Naive thymus-derived CD4-positive, alpha-beta T cell (primary cell): ENCODE measurements at regions of chr2 and their contacts with region 1.

Region 1: DNA sequence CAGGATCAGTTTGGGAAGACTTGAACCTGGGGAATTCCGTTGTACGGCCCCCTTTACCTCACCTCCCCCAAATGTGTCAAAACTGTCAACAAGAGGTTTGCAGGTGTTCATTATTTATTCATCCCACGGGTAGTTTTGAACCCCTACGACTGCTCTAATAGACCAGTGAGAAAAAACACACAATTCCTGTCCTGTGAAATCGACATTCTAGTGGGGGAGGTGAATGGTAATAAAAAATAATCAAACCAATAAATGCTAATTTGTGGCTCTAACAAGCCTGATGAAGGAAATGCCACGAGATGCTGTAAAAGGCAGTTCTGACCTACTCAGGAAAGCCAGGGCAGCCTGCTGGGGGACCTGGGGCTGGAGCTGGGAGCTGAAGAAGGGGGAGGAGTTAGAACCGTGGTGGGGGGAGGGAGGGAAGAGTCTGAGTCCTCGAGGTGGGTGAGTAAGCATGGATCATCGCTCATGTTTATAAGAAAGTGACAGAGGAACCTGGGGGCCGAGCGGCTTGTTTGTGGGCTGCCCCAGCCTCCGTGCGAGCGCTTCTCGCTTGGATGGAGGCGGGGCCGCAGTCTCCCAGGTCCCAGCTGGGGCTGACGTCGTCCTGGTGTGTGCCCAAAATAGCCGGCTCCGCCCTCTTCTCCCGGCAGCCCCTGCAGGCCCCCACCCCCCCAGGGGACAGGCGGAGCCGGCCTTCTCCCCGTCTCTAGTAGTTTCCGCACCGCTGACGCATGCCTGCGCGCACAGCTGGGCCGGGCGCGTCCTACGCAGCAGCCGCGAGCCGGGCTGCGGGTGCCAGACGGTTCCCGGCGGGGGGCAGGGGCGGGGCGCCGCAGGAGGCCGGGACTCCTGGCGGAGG is at the start of gene DNAJB2:
- DNase-seq: peak; percentile 94 to 100 (median 98)
- ATAC-seq: peak; percentile 91
- H3K4me3 ChIP-seq: peak within 1 kb of the TSS; percentile 73
- H3K4me3 Mint-ChIP-seq: peak within 1 kb of the TSS; percentile 85 to 99 (median 97)
- H3K27ac ChIP-seq: peak within 1 kb of the TSS; percentile 98
- H3K27ac Mint-ChIP-seq: peak within 1 kb of the TSS; percentile 97 to 100 (median 99)
- H3K4me1 ChIP-seq: peaks cover 22 to 33% of the 10 kb centered on the region in 2 donors
- H3K4me1 Mint-ChIP-seq: peaks cover 32 to 58% (median 53%) of the 10 kb centered on the region in 7 donors
- H3K27me3 ChIP-seq: no peaks in the 10 kb centered on the region
- H3K27me3 Mint-ChIP-seq: peaks cover 0 to 3% (median 0%) of the 10 kb centered on the region in 5 donors
- total RNA-seq, gene DNAJB2: 50.8 to 134 (median 113) TPM

Region 2: DNA sequence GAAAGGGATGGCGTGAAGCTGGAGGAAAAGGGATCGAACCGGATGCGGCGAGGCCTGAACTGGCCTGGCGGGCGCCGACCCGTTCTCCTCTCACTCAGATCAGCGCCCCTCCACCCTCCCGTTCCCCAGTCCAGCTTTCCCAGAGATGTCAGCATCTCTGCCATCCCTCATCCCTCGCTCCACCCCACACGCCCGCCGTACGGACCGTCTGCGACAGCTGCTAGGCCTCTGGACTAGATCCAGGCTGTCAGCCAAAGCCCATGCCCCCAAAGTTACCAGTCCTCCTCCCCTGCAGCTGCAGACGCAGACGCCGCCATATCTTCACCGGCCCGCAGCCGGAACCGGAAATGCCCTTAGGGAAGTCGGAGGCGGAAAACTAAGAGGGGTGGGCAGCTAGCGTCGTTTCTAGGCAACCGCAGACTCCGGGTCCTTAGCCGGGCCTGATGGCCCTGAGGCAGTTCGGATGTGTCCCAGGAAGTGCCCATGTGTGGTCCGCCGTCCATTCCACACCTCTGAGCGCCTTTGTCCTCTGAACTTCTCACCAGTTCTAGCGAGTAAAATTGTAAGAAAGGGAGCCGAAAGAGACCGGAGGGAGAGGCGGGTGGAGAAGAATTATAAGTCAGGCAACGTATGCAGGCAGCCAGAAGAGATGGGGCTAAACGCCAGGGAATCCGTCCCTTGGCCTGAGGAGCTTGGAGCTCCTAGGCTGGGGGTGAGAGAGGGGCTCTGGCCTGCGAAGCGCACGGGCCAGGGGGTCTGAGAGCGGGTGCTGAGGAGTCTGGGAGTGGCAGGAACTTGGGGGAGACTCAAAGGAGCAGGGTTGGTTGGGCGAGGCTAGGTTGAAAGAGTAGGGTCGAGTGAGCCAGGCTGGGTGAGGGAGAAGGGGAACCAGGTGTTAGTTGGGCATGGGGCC is 607.0 kb before region 1 on chr2 and contains the starts of genes RNF25 and STK36:
- CTCF ChIA-PET with region 1: no interaction called
- POLR2A ChIA-PET with region 1: no interaction called
- intact Hi-C with region 1: loop called (anchors 1 to 5 kb)
- DNase-seq: peak; percentile 60 to 86 (median 79)
- ATAC-seq: peak; percentile 96
- H3K4me3 ChIP-seq: peak within 1 kb of the TSS; percentile 81
- H3K4me3 Mint-ChIP-seq: peak within 1 kb of the TSS; percentile 88 to 100 (median 98)
- H3K27ac ChIP-seq: peak within 1 kb of the TSS; percentile 84
- H3K27ac Mint-ChIP-seq: peak within 1 kb of the TSS; percentile 90 to 98 (median 96)
- H3K4me1 ChIP-seq: peaks cover 9 to 15% of the 10 kb centered on the region in 2 donors
- H3K4me1 Mint-ChIP-seq: peaks cover 14 to 29% (median 24%) of the 10 kb centered on the region in 7 donors
- H3K27me3 ChIP-seq: no peaks in the 10 kb centered on the region
- H3K27me3 Mint-ChIP-seq: no peaks in the 10 kb centered on the region
- total RNA-seq, gene RNF25: 12.6 to 33.4 (median 28.3) TPM
- total RNA-seq, gene STK36: 18.9 to 28.1 (median 19.7) TPM

Region 3: DNA sequence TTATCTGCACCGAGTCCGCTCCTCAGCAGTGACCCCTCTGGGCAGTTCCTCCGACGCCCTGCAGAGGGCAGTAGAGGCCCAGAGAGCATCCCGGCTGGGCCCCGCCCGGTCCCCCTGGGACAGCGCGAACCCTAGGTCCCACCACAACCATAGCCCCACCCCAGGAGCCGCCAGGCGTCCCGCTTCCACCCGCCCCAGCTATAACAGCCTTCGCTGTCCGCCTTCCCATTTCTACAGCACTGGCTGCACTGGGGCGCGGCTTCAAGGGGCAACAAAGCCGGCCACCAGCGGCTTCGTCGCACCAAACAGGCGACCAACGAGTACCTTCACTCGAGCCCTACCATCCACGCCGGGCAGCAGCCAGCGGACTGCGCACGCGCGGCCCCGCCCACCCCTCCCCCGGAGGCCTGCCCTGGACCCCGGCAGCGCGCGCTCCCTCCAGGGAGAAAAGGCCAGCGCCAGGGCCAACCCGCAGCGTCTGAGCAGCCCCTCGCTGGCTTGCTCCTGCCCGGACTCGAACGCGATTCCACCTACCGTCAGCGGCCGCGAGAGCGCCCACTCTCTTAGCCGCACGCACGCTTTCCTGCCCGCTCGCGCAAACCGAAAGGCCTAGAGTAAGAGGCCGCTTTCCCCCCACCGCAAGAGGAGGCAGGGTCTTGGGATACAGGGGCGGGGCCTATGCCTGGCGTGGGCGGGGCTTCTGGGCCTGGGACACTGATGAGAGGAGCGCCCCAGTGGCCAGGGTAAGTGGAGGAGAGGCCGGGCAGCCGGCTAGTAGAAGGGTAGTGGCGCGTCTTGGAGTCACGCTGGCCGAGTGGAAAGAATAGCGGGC is 118.5 kb before region 1 on chr2 and contains the start of gene NHEJ1:
- CTCF ChIA-PET with region 1: interaction called, 3 read pairs
- POLR2A ChIA-PET with region 1: interaction called, 4 read pairs
- intact Hi-C with region 1: loop called (anchors 1 kb)
- DNase-seq: peak; percentile 84 to 98 (median 92)
- ATAC-seq: peak; percentile 96
- H3K4me3 ChIP-seq: peak within 1 kb of the TSS; percentile 70
- H3K4me3 Mint-ChIP-seq: peak within 1 kb of the TSS; percentile 88 to 97 (median 93)
- H3K27ac ChIP-seq: peak within 1 kb of the TSS; percentile 77
- H3K27ac Mint-ChIP-seq: peak within 1 kb of the TSS; percentile 81 to 97 (median 93)
- H3K4me1 ChIP-seq: peaks cover 11 to 12% of the 10 kb centered on the region in 2 donors
- H3K4me1 Mint-ChIP-seq: peaks cover 13 to 41% (median 24%) of the 10 kb centered on the region in 7 donors
- H3K27me3 ChIP-seq: no peaks in the 10 kb centered on the region
- H3K27me3 Mint-ChIP-seq: no peaks in the 10 kb centered on the region
- total RNA-seq, gene NHEJ1: 11.4 to 24.0 (median 17.9) TPM

Region 4: DNA sequence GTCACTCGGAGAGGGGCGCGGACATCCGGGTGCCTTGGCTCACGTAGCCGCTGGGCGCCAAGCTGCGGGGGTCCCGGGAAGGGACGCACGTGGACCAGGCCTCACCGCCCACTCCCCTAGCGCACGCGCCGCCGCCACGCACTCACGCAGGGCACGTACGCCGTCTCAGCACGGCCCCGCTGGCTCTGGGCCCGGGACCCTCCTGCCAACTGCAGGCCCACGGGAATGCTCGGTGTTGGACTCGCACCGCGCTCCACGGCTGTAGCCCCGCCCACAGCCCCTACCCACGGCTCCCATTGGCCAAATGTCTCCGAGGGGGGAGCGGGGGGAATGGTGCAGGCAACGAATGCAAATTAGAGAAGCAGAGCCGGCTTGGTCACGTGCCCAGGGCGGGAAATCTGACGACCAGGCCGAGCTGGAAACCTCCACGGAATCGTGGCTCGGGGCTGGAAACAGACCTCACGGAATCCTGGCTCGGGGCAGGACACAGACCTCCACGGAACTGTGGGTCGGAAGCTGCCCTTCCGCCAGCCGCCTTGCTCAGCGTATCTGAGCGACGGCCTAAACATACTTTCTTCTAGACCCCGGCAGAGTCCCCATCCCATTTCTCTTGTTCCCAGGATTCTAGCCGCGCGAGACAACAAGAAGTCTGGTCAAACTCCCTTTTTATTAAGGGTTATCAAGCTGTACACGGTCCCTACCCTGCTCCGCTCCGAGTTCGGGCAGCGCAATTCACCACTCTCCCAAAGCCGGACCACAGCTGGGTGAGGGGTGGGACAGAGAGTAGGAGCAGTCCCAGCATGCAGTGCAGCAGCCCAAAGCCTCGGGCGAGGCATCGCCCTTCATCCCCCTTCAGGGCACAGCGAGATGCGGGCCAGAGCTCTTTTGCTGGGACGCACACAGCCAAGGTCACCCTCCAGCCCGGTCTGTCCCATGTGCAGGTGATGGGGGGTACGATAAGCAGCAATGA is 59.9 kb before region 1 on chr2 and contains the start of gene ABCB6:
- CTCF ChIA-PET with region 1: interaction called, 3 read pairs
- POLR2A ChIA-PET with region 1: interaction called, 4 read pairs
- intact Hi-C with region 1: loop called (anchors 1 to 2 kb)
- DNase-seq: peak; percentile 72 to 90 (median 85)
- ATAC-seq: peak; percentile 92
- H3K4me3 ChIP-seq: peak within 1 kb of the TSS; percentile 60
- H3K4me3 Mint-ChIP-seq: peak within 1 kb of the TSS; percentile 78 to 89 (median 82)
- H3K27ac ChIP-seq: peak within 1 kb of the TSS; percentile 65
- H3K27ac Mint-ChIP-seq: peak within 1 kb of the TSS; percentile 61 to 86 (median 79)
- H3K4me1 ChIP-seq: peaks cover 13 to 14% of the 10 kb centered on the region in 2 donors
- H3K4me1 Mint-ChIP-seq: peaks cover 0 to 29% (median 24%) of the 10 kb centered on the region in 7 donors
- H3K27me3 ChIP-seq: no peaks in the 10 kb centered on the region
- H3K27me3 Mint-ChIP-seq: no peaks in the 10 kb centered on the region
- total RNA-seq, gene ABCB6: 4.1 to 30.2 (median 8.3) TPM

Region 5: DNA sequence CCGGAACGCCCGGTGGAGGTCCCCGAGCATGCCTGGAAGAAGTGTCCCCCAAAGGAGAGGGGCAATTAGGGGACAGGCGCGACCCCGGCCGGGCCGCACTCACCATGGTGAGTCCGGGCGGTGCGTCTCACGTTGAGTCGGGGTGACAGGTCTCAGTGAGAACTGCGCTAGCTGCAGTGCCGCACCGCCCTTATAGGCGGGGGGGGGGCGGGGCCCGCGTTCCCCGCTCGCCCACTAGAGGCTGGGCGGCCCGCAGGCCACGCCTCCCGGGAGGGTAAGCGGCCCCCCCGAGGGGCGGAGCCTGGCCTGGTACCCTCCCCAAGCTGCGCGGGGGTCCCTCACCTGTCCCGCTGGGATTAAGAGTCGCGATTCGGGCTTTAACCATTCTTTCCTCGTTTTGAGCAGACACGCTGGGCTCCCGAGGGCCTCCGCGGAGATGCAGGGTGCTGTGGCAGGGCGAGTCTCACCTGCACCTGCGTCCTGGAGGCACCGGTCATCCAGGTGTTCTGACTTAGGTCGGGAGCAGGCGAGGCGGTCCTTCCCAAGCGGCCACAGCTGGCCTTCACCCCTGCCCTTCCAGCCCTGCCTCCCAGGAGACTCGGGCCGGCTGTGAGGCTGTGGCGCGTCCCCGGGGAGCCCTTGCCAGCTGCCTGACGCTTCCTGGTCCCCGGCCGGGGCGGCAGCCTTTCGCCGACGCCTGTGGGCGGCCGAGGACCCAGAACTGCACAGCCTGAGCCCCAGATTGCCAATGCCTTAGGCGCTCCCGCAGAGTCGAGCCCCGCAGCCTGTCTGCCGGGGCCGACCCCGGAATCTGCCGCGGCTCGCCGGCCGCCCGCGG is 24.9 kb before region 1 on chr2 and contains the start of gene TUBA4A:
- CTCF ChIA-PET with region 1: interaction called, 20 read pairs
- POLR2A ChIA-PET with region 1: interaction called, 214 read pairs
- intact Hi-C with region 1: loop called (anchors 1 kb)
- DNase-seq: peak; percentile 84 to 94 (median 91)
- ATAC-seq: peak; percentile 92
- H3K4me3 ChIP-seq: peak within 1 kb of the TSS; percentile 79
- H3K4me3 Mint-ChIP-seq: peak within 1 kb of the TSS; percentile 82 to 100 (median 92)
- H3K27ac ChIP-seq: peak within 1 kb of the TSS; percentile 95
- H3K27ac Mint-ChIP-seq: peak within 1 kb of the TSS; percentile 88 to 99 (median 96)
- H3K4me1 ChIP-seq: peaks cover 31 to 38% of the 10 kb centered on the region in 2 donors
- H3K4me1 Mint-ChIP-seq: peaks cover 28 to 54% (median 47%) of the 10 kb centered on the region in 7 donors
- H3K27me3 ChIP-seq: no peaks in the 10 kb centered on the region
- H3K27me3 Mint-ChIP-seq: peaks cover 0 to 3% (median 0%) of the 10 kb centered on the region in 5 donors
- total RNA-seq, gene TUBA4A: 82.9 to 260 (median 183) TPM

Region 6: GRCh38 chr2:219498280-219499057 is 219.6 kb after region 1 on chr2 and contains the start of gene GMPPA:
- CTCF ChIA-PET with region 1: no interaction called
- POLR2A ChIA-PET with region 1: interaction called, 4 read pairs
- intact Hi-C with region 1: loop called (anchors 1 kb)
- DNase-seq: peak; percentile 78 to 95 (median 90)
- ATAC-seq: peak; percentile 94
- H3K4me3 ChIP-seq: peak within 1 kb of the TSS; percentile 85
- H3K4me3 Mint-ChIP-seq: peak within 1 kb of the TSS; percentile 91 to 99 (median 96)
- H3K27ac ChIP-seq: peak within 1 kb of the TSS; percentile 79
- H3K27ac Mint-ChIP-seq: peak within 1 kb of the TSS; percentile 76 to 97 (median 86)
- H3K4me1 ChIP-seq: peaks cover 19 to 22% of the 10 kb centered on the region in 2 donors
- H3K4me1 Mint-ChIP-seq: peaks cover 26 to 42% (median 36%) of the 10 kb centered on the region in 7 donors
- H3K27me3 ChIP-seq: peaks cover 4 to 9% of the 10 kb centered on the region in 2 donors
- H3K27me3 Mint-ChIP-seq: peaks cover 28 to 47% (median 40%) of the 10 kb centered on the region in 5 donors
- total RNA-seq, gene GMPPA: 22.4 to 58.3 (median 37.2) TPM